AG04450 (cell line): ENCODE measurements at regions of chrX and their contacts with region 1.

Region 1: GRCh38 chrX:38192007-38192810 is 28.5 kb downstream of the SRPX start:
- DNase-seq: no peak
- H3K4me3 ChIP-seq: no peak overlapping the region
- H3K27ac ChIP-seq: no peak overlapping the region
- H3K27me3 ChIP-seq: no peaks in the 10 kb centered on the region
- CTCF ChIP-seq: peak; percentile 44

Region 2: DNA sequence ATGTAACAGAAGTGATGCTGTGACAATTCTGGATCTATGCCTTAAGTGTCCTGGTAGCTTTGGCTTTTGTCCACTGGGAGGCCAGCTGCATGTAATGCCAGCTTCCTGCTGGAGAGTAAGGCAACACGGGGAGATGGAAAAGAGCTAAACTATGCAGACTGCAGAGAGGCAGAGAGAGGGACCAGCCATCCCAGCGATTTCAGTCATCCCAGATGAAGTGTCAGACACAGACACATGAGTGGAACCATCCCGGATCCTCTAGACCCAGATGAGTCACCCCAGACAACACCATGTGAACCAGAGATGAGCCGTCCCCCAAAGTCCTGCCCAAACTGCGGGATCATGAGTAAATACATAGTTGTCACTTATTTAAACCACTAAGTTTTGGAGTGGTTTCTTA is 13.8 kb after region 1 on chrX:
- CTCF ChIA-PET with region 1: no interaction called
- POLR2A ChIA-PET with region 1: no interaction called
- DNase-seq: no peak
- H3K4me3 ChIP-seq: no peak overlapping the region
- H3K27ac ChIP-seq: no peak overlapping the region
- H3K27me3 ChIP-seq: no peaks in the 10 kb centered on the region
- CTCF ChIP-seq: no peak

Region 3: DNA sequence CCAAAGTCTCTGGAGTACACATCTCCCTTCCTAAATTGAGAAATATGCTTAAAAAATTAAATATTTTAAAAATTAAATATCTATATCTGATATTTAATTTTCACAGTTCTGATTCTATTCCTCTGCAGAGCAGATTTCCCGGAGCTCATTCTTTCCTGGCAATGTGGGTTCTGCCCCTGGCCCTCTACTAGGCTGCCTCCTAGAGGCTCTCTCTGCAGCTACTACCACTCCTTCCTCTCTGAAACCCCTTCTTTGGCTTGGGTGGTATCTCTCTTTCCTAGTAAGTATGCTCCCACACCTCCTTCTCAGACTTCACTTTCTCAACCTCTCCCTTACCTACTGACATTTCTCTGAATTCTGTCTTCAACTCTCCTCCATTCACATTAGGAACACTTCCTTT is 89.8 kb after region 1 on chrX:
- CTCF ChIA-PET with region 1: interaction called, 40 read pairs
- POLR2A ChIA-PET with region 1: no interaction called
- DNase-seq: no peak
- H3K4me3 ChIP-seq: no peak overlapping the region
- H3K27ac ChIP-seq: no peak overlapping the region
- H3K27me3 ChIP-seq: no peaks in the 10 kb centered on the region
- CTCF ChIP-seq: peak; percentile 61

Region 4: GRCh38 chrX:38327007-38327774 is 135.0 kb after region 1 on chrX and contains the start of gene RPGR:
- CTCF ChIA-PET with region 1: interaction called, 20 read pairs
- POLR2A ChIA-PET with region 1: no interaction called
- DNase-seq: peak; percentile 70
- H3K4me3 ChIP-seq: peak within 1 kb of the TSS; percentile 74
- H3K27ac ChIP-seq: peak within 1 kb of the TSS; percentile 87
- H3K27me3 ChIP-seq: no peaks in the 10 kb centered on the region
- CTCF ChIP-seq: peak; percentile 77
- polyA plus RNA-seq, gene RPGR: 1.3 and 2.0 TPM in 2 replicates